MCF 10A (cell line): ENCODE measurements at regions of chr9 and their contacts with region 1.

Region 1: GRCh38 chr9:19493174-19493811 is 84.5 kb downstream of the ACER2 start:
- DNase-seq: peak; percentile 67
- H3K4me3 Mint-ChIP-seq: peak overlapping the region; percentile 72
- H3K27ac Mint-ChIP-seq: no peak overlapping the region
- H3K4me1 Mint-ChIP-seq: peaks cover 16% of the 10 kb centered on the region
- H3K27me3 Mint-ChIP-seq: peaks cover 19% of the 10 kb centered on the region
- CTCF ChIP-seq: peak; percentile 81

Region 2: DNA sequence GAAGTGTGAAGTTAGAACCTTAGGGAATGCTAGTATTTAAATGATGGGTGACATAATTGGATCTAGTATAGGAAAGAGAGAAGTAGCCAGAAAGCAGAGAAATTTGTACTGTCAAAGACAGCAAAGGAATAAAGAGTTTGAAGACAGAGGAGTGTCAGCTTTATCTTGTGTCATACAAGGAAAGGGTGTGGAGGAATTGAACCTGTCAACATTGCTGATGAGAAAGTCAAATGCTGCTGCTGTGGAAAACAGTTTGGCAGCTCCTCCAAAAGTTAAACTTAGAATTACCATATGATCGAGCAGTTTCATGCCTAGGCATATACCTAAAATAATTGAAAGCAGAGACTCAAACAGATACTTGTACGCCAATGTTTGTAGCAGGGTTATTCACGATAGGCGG is 199.1 kb before region 1 on chr9:
- CTCF ChIA-PET with region 1: no interaction called
- POLR2A ChIA-PET with region 1: no interaction called
- intact Hi-C with region 1: no loop called
- DNase-seq: no peak
- H3K4me3 Mint-ChIP-seq: no peak overlapping the region
- H3K27ac Mint-ChIP-seq: peak overlapping the region; percentile 11
- H3K4me1 Mint-ChIP-seq: peaks cover 6% of the 10 kb centered on the region
- H3K27me3 Mint-ChIP-seq: no peaks in the 10 kb centered on the region
- CTCF ChIP-seq: no peak

Region 3: DNA sequence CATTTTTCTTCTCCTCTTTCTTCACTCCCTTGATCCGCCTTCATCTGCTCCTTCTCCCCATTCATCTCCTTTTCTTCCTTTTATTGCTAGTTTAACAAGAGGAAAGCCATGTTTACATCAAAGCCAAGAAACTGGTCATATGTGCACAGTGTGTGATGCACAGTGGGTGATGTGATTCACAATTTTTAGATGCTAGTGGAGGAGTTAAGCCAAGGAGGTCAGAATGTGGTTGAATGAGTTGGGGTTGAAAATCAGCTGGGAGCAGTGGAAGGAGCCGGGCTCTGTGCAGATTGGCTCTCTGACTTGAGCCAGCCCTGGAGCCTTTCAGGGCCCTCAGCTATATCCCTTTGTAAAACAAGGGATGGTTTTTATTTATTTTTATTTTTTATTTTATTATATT is 77.2 kb before region 1 on chr9:
- CTCF ChIA-PET with region 1: no interaction called
- POLR2A ChIA-PET with region 1: no interaction called
- intact Hi-C with region 1: no loop called
- DNase-seq: no peak
- H3K4me3 Mint-ChIP-seq: no peak overlapping the region
- H3K27ac Mint-ChIP-seq: no peak overlapping the region
- H3K4me1 Mint-ChIP-seq: peaks cover 4% of the 10 kb centered on the region
- H3K27me3 Mint-ChIP-seq: no peaks in the 10 kb centered on the region
- CTCF ChIP-seq: no peak

Region 4: DNA sequence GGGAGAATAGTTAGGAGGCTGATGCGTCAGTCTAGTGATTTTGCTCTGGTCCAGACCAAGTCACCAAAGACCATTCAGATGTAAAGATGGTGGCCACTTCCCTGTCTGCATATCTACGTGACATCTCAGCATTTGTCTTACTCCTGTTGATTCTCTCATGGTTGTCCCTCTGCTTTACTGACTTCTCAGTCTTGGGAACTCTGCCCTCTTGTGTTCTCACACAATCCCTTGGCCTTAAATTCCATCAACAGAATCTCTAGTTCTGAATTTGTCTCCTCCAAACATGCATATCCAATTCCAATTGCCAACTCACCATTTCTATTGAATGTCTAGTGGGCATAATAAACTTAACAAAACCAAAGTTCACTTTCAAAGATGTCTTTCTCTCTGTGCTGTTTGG is 147.8 kb after region 1 on chr9:
- CTCF ChIA-PET with region 1: no interaction called
- POLR2A ChIA-PET with region 1: no interaction called
- intact Hi-C with region 1: loop called (anchors 2 kb)
- DNase-seq: peak; percentile 3
- H3K4me3 Mint-ChIP-seq: no peak overlapping the region
- H3K27ac Mint-ChIP-seq: no peak overlapping the region
- H3K4me1 Mint-ChIP-seq: no peaks in the 10 kb centered on the region
- H3K27me3 Mint-ChIP-seq: peaks cover 41% of the 10 kb centered on the region
- CTCF ChIP-seq: no peak

Region 5: DNA sequence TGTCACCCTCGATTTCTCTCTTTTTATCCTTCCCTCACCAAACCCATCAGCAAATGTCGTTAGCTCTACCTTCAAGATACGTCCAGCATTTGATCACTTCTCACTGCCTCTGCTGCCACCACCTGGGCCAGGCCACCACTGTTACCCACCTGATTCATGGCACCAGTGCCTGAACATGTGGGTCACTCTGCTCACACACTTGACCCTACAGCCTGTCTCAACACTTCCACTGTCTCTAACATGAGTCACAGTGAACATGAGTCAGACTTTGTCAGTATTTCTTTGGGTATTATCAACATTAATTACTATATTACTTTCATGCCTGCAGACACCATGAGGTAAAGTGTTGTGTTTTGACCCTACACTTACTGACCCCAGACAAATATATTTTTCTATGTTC is 275.9 kb after region 1 on chr9:
- CTCF ChIA-PET with region 1: no interaction called
- POLR2A ChIA-PET with region 1: no interaction called
- intact Hi-C with region 1: loop called (anchors 10 kb)
- DNase-seq: peak; percentile 45
- H3K4me3 Mint-ChIP-seq: no peak overlapping the region
- H3K27ac Mint-ChIP-seq: no peak overlapping the region
- H3K4me1 Mint-ChIP-seq: no peaks in the 10 kb centered on the region
- H3K27me3 Mint-ChIP-seq: peaks cover 25% of the 10 kb centered on the region
- CTCF ChIP-seq: no peak

Region 6: GRCh38 chr9:20189871-20190270 is 696.6 kb after region 1 on chr9:
- CTCF ChIA-PET with region 1: no interaction called
- POLR2A ChIA-PET with region 1: no interaction called
- intact Hi-C with region 1: no loop called
- DNase-seq: no peak
- H3K4me3 Mint-ChIP-seq: no peak overlapping the region
- H3K27ac Mint-ChIP-seq: no peak overlapping the region
- H3K4me1 Mint-ChIP-seq: no peaks in the 10 kb centered on the region
- H3K27me3 Mint-ChIP-seq: no peaks in the 10 kb centered on the region
- CTCF ChIP-seq: no peak